ENCODE measurements at regions of chr5 and their contacts with region 1.

Region 1: DNA sequence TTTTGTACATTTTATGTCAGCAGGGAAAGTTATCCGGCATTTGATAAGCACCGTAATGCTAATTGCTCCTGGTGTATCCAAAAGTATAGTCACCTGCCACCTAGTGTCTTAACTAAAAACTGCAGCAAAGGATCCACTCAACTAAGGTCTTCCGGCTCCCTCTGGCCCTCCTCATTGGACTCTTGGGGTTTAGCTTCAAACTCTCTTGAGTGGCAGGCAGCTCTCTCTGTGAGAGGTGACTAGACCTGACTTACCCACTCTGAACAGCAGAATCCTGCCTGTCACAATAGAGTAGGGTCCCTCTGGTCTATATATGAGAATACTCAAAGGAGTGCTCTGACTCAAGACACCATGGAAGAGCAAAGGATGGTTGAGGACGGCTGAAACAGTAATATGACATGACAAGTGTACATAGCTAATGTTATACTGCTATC is 60.3 kb upstream of the CAST start:
- DNase-seq: peak; percentile 67
- H3K4me3 ChIP-seq: no peak overlapping the region
- H3K27ac ChIP-seq: no peak overlapping the region
- H3K4me1 ChIP-seq: peaks cover 0 to 4% of the 10 kb centered on the region in 2 experiments; a peak in 1 of 4 replicates
- H3K27me3 ChIP-seq: no peaks in the 10 kb centered on the region
- CTCF ChIP-seq: peak; percentile 81
- EP300 ChIP-seq: no peak
- RAD21 ChIP-seq: peak; percentile 79

Region 2: GRCh38 chr5:95858661-95859326 is 743.0 kb before region 1 on chr5:
- CTCF ChIA-PET with region 1: interaction called, 11 read pairs
- POLR2A ChIA-PET with region 1: no interaction called
- DNase-seq: peak; percentile 93
- H3K4me3 ChIP-seq: peak overlapping the region; percentile 36 to 45
- H3K27ac ChIP-seq: peak overlapping the region; percentile 71 to 95
- H3K4me1 ChIP-seq: peaks cover 2 to 35% of the 10 kb centered on the region in 2 experiments; a peak in 3 of 4 replicates
- H3K27me3 ChIP-seq: no peaks in the 10 kb centered on the region
- CTCF ChIP-seq: peak; percentile 98
- EP300 ChIP-seq: peak in 1 of 2 experiments; percentile 80; a peak in 1 of 4 replicates
- RAD21 ChIP-seq: peak; percentile 97

Region 3: DNA sequence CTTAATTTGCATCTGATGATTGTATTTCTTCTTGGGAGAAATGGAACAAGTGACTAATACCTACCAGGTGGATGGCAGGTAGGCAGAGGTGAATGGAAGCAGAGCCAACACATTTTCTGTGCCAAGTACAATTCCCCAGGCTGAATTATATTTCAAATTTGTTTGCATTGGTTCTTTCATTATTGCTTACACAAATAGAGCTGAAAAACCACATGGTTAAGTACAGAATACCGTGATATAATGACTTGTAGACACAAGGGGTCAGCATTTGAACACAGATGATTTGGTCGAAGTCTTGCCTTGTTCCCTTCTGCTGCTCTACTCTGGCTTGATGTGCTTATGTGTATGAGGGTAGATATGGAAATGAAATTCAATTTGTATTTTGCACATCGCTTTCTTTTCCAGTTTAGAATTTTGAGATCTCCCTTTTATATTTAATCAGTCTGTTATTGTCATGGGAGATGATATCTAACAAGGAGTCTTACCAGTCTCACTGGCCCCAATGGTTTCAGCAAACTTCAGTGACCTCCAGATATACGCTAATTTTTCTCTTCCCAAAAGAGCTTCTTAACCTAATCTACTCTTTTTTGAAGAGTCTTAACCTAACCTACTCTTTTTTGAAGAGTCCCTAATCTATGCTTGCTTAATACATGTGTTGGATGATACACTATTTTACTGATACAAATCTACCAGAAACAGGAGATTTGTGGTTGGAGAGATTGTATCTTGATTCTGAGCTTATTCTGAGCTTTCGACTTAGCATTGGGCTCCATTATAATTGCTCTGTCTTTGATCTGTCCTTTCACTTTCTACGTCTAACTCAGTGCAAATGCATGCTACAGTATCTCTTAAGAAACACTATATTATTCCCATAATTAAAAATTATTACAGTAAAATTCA is 256.9 kb before region 1 on chr5:
- CTCF ChIA-PET with region 1: interaction called, 112 read pairs
- POLR2A ChIA-PET with region 1: no interaction called
- DNase-seq: peak; percentile 36
- H3K4me3 ChIP-seq: no peak overlapping the region; a peak in 1 of 4 replicates
- H3K27ac ChIP-seq: no peak overlapping the region
- H3K4me1 ChIP-seq: peaks cover 0 to 17% of the 10 kb centered on the region in 2 experiments; a peak in 3 of 4 replicates
- H3K27me3 ChIP-seq: no peaks in the 10 kb centered on the region
- CTCF ChIP-seq: peak; percentile 75
- EP300 ChIP-seq: no peak
- RAD21 ChIP-seq: peak; percentile 97

Region 4: GRCh38 chr5:96381526-96381925 is 220.3 kb before region 1 on chr5:
- CTCF ChIA-PET with region 1: interaction called, 26 read pairs
- POLR2A ChIA-PET with region 1: no interaction called
- DNase-seq: peak; percentile 15
- H3K4me3 ChIP-seq: no peak overlapping the region
- H3K27ac ChIP-seq: no peak overlapping the region
- H3K4me1 ChIP-seq: peaks cover 0 to 9% of the 10 kb centered on the region in 2 experiments; a peak in 3 of 4 replicates
- H3K27me3 ChIP-seq: no peaks in the 10 kb centered on the region
- CTCF ChIP-seq: no peak
- EP300 ChIP-seq: no peak
- RAD21 ChIP-seq: peak; percentile 61

Region 5: GRCh38 chr5:96629774-96630173 is 27.9 kb after region 1 on chr5:
- CTCF ChIA-PET with region 1: interaction called, 10 read pairs
- POLR2A ChIA-PET with region 1: no interaction called
- DNase-seq: no peak
- H3K4me3 ChIP-seq: no peak overlapping the region
- H3K27ac ChIP-seq: peak overlapping the region; percentile 73 to 83; a peak in 3 of 4 replicates
- H3K4me1 ChIP-seq: peaks cover 0 to 45% of the 10 kb centered on the region in 2 experiments; a peak in 2 of 4 replicates
- H3K27me3 ChIP-seq: no peaks in the 10 kb centered on the region
- CTCF ChIP-seq: no peak
- EP300 ChIP-seq: peak in 1 of 2 experiments; percentile 54; a peak in 1 of 4 replicates
- RAD21 ChIP-seq: no peak

Region 6: DNA sequence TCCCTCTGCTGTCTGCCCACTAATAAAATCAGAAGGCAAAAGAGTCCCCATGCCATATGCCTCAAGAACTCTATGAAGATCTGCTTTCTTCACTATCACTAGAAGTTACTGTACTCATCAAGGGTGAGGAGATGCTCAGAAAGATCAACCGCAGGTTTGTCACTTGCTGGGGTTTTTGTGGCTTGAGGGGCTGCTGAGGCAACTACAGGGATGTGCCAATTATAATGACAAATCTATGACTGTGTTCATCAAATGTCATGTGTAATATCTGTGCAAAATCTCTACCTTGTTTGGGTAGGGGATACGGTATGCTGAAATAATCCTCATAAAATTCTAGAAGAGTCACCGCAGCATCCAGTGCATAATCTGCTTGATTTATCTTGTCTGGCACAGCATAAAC is 192.9 kb after region 1 on chr5:
- CTCF ChIA-PET with region 1: no interaction called
- POLR2A ChIA-PET with region 1: no interaction called
- DNase-seq: no peak
- H3K4me3 ChIP-seq: no peak overlapping the region
- H3K27ac ChIP-seq: no peak overlapping the region
- H3K4me1 ChIP-seq: no peaks in the 10 kb centered on the region; a peak in 2 of 4 replicates
- H3K27me3 ChIP-seq: no peaks in the 10 kb centered on the region
- CTCF ChIP-seq: no peak
- EP300 ChIP-seq: no peak
- RAD21 ChIP-seq: no peak